ENCODE measurements at regions of chr4 and their contacts with region 1.

Region 1: DNA sequence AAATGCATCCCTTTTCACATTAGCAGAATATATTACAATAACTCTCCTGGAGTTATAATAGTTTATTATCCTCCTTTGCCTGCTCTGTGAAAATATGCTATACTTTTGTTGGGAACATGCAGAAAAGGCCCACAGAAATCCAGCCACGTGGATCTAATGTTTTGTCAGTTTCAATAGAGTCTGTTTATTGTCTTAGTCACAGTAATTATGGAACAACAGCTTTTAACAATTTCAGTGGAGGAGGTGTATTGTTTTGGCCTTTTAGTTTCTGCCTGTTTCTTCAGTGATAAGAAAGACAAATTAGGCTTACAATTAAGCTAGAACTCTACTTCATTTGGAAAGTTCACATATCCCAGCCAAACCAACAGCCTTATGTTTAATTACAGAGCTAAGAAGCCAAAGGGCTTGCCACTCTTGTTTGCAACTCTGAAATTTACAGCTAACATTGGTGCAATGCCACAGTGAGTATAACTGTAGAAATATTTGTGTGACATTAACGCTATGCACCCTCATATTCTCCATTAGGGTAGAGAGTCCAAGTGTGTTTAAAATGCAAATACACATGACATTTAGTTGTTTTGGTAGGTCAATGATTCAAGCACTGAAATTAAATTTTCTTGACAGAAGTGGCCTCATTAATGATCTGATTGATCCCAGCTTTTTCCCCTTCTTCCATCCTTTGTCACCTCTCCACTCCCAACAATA is 175.8 kb downstream of the USP46 start:
- DNase-seq: no peak
- H3K4me3 ChIP-seq: no peak overlapping the region
- H3K27ac ChIP-seq: no peak overlapping the region
- H3K4me1 ChIP-seq: no peaks in the 10 kb centered on the region
- H3K27me3 ChIP-seq: no peaks in the 10 kb centered on the region
- CTCF ChIP-seq: no peak
- EP300 ChIP-seq: no peak
- POLR2A ChIP-seq: no peak

Region 2: DNA sequence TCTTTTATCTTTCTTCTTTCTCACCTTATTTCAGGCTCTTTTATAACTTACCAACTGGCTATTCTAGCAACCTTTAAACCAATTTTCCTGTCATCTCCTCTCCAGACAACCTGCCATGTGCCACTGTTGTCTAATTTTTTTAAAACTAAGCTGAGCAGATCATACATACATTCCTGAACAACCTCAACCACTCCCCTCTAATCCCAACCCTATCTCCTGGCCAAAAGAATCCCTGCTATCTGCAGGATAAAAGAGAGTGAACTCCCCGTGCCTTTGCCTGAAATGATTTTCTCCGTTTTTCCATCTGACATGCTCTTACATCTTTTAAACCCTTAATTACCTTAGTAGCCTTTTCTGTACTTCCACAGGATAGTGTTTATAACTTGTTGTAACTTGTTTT is 604.9 kb before region 1 on chr4:
- in situ Hi-C with region 1: no loop called
- intact Hi-C with region 1: loop called (anchors 5 kb)
- DNase-seq: no peak
- H3K4me3 ChIP-seq: no peak overlapping the region
- H3K27ac ChIP-seq: no peak overlapping the region
- H3K4me1 ChIP-seq: no peaks in the 10 kb centered on the region
- H3K27me3 ChIP-seq: no peaks in the 10 kb centered on the region
- CTCF ChIP-seq: no peak
- EP300 ChIP-seq: no peak
- POLR2A ChIP-seq: no peak

Measured in transverse colon (tissue), 4 donors.